ENCODE measurements at regions of chr5 and their contacts with region 1.

Region 1: DNA sequence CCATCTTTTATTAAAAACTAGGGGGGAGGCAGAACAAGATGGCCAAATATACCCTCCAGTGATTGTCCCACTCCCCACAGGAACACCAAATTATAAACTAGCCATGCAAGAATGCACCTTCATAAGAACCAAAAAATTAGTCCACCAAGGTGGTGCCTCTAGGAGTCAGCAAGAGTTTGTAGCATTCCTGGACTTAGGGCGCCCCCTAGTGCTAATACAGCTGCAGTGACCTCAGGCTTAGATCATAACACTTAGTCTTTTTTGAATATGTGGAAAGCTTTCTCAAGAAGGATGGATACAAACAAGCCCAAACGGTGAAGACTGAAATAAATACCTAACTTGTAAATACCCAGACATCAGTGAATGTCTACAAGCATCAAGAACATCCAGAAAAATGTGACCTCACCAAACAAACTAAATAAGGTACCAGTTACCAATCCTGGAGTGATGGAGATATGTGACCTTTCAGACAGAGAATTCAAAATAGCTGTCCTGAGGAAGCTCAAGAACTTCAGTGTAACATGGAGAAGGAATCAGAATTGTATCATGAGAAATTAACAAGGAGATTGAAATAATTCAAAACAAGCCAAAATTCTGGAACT is 19.3 kb downstream of the PPIP5K2 start:
- DNase-seq: peak; percentile 60 to 88 (median 83)
- ATAC-seq: peak; percentile 98
- H3K4me3 ChIP-seq: no peak overlapping the region
- H3K4me3 Mint-ChIP-seq: no peak overlapping the region
- H3K27ac ChIP-seq: no peak overlapping the region
- H3K27ac Mint-ChIP-seq: no peak overlapping the region
- H3K4me1 ChIP-seq: no peaks in the 10 kb centered on the region
- H3K4me1 Mint-ChIP-seq: peaks cover 2% of the 10 kb centered on the region
- H3K27me3 ChIP-seq: no peaks in the 10 kb centered on the region
- H3K27me3 Mint-ChIP-seq: no peaks in the 10 kb centered on the region
- CTCF ChIP-seq: peak; percentile 94

Region 2: GRCh38 chr5:102583276-102584124 is 555.9 kb before region 1 on chr5:
- CTCF ChIA-PET with region 1: interaction called, 3 read pairs
- POLR2A ChIA-PET with region 1: interaction called, 3 read pairs
- intact Hi-C with region 1: loop called (anchors 1 kb)
- DNase-seq: peak in 2 of 9 experiments; percentile 8 to 14
- ATAC-seq: no peak
- H3K4me3 ChIP-seq: no peak overlapping the region
- H3K4me3 Mint-ChIP-seq: no peak overlapping the region
- H3K27ac ChIP-seq: no peak overlapping the region
- H3K27ac Mint-ChIP-seq: no peak overlapping the region
- H3K4me1 ChIP-seq: no peaks in the 10 kb centered on the region
- H3K4me1 Mint-ChIP-seq: no peaks in the 10 kb centered on the region
- H3K27me3 ChIP-seq: no peaks in the 10 kb centered on the region
- H3K27me3 Mint-ChIP-seq: peaks cover 1% of the 10 kb centered on the region
- CTCF ChIP-seq: peak; percentile 47

Region 3: DNA sequence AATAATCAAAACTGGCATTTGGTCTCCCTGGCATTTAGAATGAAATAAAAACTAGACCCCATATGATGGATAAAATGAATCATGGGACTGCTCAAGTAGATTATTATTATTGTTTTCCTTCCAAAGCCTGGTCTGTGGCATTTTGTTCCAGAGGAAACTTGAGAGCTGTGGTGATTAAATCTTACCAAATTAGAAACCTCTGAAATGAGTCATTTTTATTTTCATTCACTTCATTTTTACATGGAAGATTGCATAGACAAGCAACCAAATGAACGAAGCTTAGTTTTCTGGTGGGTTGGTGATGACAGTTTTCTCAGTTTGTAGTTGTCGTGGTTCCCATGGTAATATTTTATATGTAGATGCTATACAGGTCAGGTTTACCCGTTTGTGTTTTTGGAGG is 360.9 kb before region 1 on chr5:
- CTCF ChIA-PET with region 1: interaction called, 40 read pairs
- POLR2A ChIA-PET with region 1: interaction called, 4 read pairs
- intact Hi-C with region 1: loop called (anchors 1 kb)
- DNase-seq: no peak
- ATAC-seq: no peak
- H3K4me3 ChIP-seq: no peak overlapping the region
- H3K4me3 Mint-ChIP-seq: no peak overlapping the region
- H3K27ac ChIP-seq: no peak overlapping the region
- H3K27ac Mint-ChIP-seq: no peak overlapping the region
- H3K4me1 ChIP-seq: peaks cover 9% of the 10 kb centered on the region
- H3K4me1 Mint-ChIP-seq: peaks cover 22% of the 10 kb centered on the region
- H3K27me3 ChIP-seq: no peaks in the 10 kb centered on the region
- H3K27me3 Mint-ChIP-seq: no peaks in the 10 kb centered on the region
- CTCF ChIP-seq: no peak

Region 4: GRCh38 chr5:102998224-102998623 is 141.1 kb before region 1 on chr5:
- CTCF ChIA-PET with region 1: no interaction called
- POLR2A ChIA-PET with region 1: no interaction called
- intact Hi-C with region 1: no loop called
- DNase-seq: no peak
- ATAC-seq: no peak
- H3K4me3 ChIP-seq: no peak overlapping the region
- H3K4me3 Mint-ChIP-seq: no peak overlapping the region
- H3K27ac ChIP-seq: no peak overlapping the region
- H3K27ac Mint-ChIP-seq: no peak overlapping the region
- H3K4me1 ChIP-seq: no peaks in the 10 kb centered on the region
- H3K4me1 Mint-ChIP-seq: peaks cover 9% of the 10 kb centered on the region
- H3K27me3 ChIP-seq: no peaks in the 10 kb centered on the region
- H3K27me3 Mint-ChIP-seq: no peaks in the 10 kb centered on the region
- CTCF ChIP-seq: no peak

Region 5: GRCh38 chr5:103041071-103041676 is 98.2 kb before region 1 on chr5:
- CTCF ChIA-PET with region 1: interaction called, 3 read pairs
- POLR2A ChIA-PET with region 1: no interaction called
- intact Hi-C with region 1: loop called (anchors 1 to 5 kb)
- DNase-seq: peak in 2 of 9 experiments; percentile 44 to 58
- ATAC-seq: no peak
- H3K4me3 ChIP-seq: no peak overlapping the region
- H3K4me3 Mint-ChIP-seq: no peak overlapping the region
- H3K27ac ChIP-seq: no peak overlapping the region
- H3K27ac Mint-ChIP-seq: no peak overlapping the region
- H3K4me1 ChIP-seq: no peaks in the 10 kb centered on the region
- H3K4me1 Mint-ChIP-seq: no peaks in the 10 kb centered on the region
- H3K27me3 ChIP-seq: no peaks in the 10 kb centered on the region
- H3K27me3 Mint-ChIP-seq: peaks cover 2% of the 10 kb centered on the region
- CTCF ChIP-seq: peak; percentile 49

Region 6: GRCh38 chr5:103119765-103120606 is 19.4 kb before region 1 on chr5 and contains the starts of genes GIN1 and PPIP5K2:
- CTCF ChIA-PET with region 1: interaction called, 3 read pairs
- POLR2A ChIA-PET with region 1: interaction called, 4 read pairs
- intact Hi-C with region 1: loop called in 1 of 2 experiments (anchors 1 kb)
- DNase-seq: peak; percentile 96 to 98 (median 97)
- ATAC-seq: peak; percentile 90
- H3K4me3 ChIP-seq: peak within 1 kb of the TSS; percentile 77 to 83
- H3K4me3 Mint-ChIP-seq: peak within 1 kb of the TSS; percentile 94
- H3K27ac ChIP-seq: peak within 1 kb of the TSS; percentile 85 to 94
- H3K27ac Mint-ChIP-seq: peak within 1 kb of the TSS; percentile 98
- H3K4me1 ChIP-seq: peaks cover 33% of the 10 kb centered on the region
- H3K4me1 Mint-ChIP-seq: peaks cover 53% of the 10 kb centered on the region
- H3K27me3 ChIP-seq: no peaks in the 10 kb centered on the region
- H3K27me3 Mint-ChIP-seq: no peaks in the 10 kb centered on the region
- CTCF ChIP-seq: no peak
- total RNA-seq, gene GIN1: 1.5 to 1.6 TPM
- total RNA-seq, gene PPIP5K2: 43.4 to 51.1 TPM

Region 7: DNA sequence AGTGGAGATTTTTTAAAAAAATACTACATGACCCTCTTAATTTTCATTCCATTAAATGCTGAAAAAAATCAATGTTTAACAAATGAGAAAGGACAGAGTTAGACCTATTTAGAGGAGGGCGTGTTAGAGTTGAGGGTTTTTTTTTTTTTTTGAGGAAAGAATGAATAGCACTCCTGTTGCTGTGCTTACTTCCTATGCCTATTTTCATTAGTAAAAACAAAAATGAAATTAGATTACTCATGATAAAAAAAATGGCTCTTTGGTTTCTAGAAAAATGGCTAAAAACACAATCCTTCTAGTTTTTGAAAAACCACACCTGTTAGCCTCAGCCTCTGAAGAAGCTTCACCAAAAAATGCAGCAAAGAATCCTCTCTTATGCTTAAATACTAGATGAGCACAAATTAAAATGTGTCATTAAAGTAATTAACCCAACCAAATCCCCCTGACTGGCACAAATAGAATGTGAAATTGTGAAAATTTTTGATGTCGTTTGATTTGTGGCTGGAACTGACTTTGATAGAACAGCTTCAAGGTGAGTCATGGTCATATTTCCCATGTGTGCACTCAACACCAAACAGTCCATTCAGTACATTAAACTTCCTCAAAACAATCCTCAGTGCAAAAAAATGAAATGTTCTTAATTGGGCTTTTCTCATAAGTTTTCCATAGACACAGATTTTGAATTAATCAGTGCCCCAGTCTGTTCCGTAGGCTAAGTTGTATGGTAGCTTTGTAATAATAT is 217.2 kb after region 1 on chr5:
- CTCF ChIA-PET with region 1: no interaction called
- POLR2A ChIA-PET with region 1: no interaction called
- intact Hi-C with region 1: no loop called
- DNase-seq: no peak
- ATAC-seq: no peak
- H3K4me3 ChIP-seq: no peak overlapping the region
- H3K4me3 Mint-ChIP-seq: no peak overlapping the region
- H3K27ac ChIP-seq: no peak overlapping the region
- H3K27ac Mint-ChIP-seq: no peak overlapping the region
- H3K4me1 ChIP-seq: no peaks in the 10 kb centered on the region
- H3K4me1 Mint-ChIP-seq: no peaks in the 10 kb centered on the region
- H3K27me3 ChIP-seq: no peaks in the 10 kb centered on the region
- H3K27me3 Mint-ChIP-seq: no peaks in the 10 kb centered on the region
- CTCF ChIP-seq: no peak

Measured in CD8-positive, alpha-beta T cell (primary cell).